ENCODE measurements at regions of chr20 and their contacts with region 1.

Region 1: GRCh38 chr20:13468166-13468565 is 170.6 kb downstream of the TASP1 start:
- DNase-seq: no peak
- H3K4me3 ChIP-seq: no peak overlapping the region
- H3K4me3 Mint-ChIP-seq: no peak overlapping the region
- H3K27ac ChIP-seq: no peak overlapping the region
- H3K27ac Mint-ChIP-seq: no peak overlapping the region
- H3K4me1 ChIP-seq: no peaks in the 10 kb centered on the region
- H3K4me1 Mint-ChIP-seq: no peaks in the 10 kb centered on the region
- H3K27me3 ChIP-seq: no peaks in the 10 kb centered on the region
- H3K27me3 Mint-ChIP-seq: peaks cover 0 to 2% (median 0%) of the 10 kb centered on the region in 3 donors
- CTCF ChIP-seq: no peak

Region 2: DNA sequence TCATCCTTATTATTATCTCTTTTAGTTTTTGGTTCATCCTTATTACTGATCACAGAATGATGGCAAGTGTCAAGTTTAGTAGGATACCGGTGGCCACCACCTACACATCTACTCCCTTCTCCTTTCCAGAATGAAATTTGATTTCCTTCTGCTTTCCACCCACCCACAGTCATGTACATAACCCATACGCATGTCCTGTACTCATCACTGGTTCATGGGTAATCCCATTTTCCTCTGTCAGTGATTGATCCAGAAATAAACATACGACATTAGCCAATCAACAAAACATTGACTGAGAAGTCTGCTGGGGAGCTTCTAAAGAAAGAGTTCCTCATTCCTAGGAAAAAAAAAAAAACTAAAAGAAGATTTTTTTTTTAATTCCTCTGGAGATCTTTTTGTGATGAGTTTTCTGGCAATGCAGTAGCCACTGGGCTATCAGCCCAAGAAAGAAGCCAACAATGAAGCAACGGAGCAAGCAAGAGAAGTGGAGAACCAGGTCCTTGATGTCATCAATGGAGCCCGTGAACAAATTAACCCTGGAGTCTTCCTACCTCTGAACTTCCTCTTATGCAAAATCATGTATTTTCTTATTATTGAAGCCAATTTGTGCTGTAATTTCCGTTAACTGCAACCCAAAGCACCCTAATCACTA is 42.8 kb after region 1 on chr20:
- intact Hi-C with region 1: loop called in 1 of 2 experiments (anchors 1 kb)
- DNase-seq: no peak
- H3K4me3 ChIP-seq: no peak overlapping the region
- H3K4me3 Mint-ChIP-seq: no peak overlapping the region
- H3K27ac ChIP-seq: no peak overlapping the region
- H3K27ac Mint-ChIP-seq: no peak overlapping the region
- H3K4me1 ChIP-seq: no peaks in the 10 kb centered on the region
- H3K4me1 Mint-ChIP-seq: no peaks in the 10 kb centered on the region
- H3K27me3 ChIP-seq: no peaks in the 10 kb centered on the region
- H3K27me3 Mint-ChIP-seq: no peaks in the 10 kb centered on the region
- CTCF ChIP-seq: no peak

Region 3: DNA sequence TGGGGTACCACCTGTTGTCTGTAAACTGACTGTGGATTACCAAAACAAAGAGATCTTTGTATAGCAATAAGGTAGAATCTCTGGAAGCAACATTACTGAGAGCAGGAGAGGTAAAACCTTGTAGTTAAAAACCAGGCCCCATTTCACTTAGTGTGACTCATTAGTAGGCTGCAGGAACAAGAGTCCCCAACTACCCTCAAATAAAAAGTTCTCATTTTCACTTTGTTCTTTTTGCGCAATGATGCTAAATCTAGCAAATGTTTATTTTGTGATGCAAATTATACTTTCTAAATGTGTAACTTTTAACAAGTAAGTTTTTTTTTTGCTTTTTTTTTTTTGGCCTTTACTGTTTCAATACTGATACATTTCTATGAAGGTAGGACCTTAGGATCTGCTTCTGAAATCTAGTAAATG is 249.5 kb after region 1 on chr20:
- intact Hi-C with region 1: no loop called
- DNase-seq: no peak
- H3K4me3 ChIP-seq: no peak overlapping the region
- H3K4me3 Mint-ChIP-seq: no peak overlapping the region
- H3K27ac ChIP-seq: peak overlapping the region in 1 of 2 donors; percentile 14
- H3K27ac Mint-ChIP-seq: peak overlapping the region in 1 of 7 donors; percentile 35
- H3K4me1 ChIP-seq: peaks cover 4 to 6% of the 10 kb centered on the region in 2 donors
- H3K4me1 Mint-ChIP-seq: peaks cover 14% of the 10 kb centered on the region
- H3K27me3 ChIP-seq: no peaks in the 10 kb centered on the region
- H3K27me3 Mint-ChIP-seq: no peaks in the 10 kb centered on the region
- CTCF ChIP-seq: no peak

Measured in CD14-positive monocyte (primary cell).